ENCODE measurements at regions of chr15 and their contacts with region 1.

Region 1: DNA sequence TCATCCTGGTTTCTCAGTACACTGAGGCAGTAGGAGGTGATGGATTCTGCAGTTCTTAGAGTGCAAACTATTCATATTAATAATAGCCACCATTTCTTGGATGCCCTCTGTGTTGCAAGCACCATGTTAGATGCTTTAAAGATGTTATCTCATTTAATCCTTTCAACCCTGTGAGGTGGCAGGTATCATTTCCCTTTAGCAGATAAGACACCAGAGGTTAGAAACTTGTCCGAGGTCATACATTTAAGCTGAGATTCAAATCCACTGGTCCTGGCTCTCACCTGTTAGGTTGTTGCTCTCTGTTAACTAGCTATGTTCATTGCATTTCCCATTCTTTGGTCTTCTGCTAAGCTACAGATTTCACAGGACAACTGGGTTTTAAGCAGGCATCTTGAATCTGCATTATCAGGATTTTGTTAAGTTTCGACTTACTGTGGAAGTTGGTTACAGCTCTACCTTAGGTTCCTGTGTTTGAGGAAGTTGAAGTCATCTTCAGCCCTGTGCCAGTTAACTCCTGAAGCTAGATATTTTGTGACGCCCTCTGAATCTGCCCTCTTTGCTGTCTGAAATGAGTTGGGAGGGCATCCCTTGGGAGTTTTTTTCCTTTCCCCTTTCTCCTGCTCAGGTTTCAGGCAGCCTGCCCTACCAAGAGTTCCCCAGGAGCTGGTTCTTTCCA is 6.4 kb downstream of the PDE8A start:
- H3K4me3 Mint-ChIP-seq: no peak overlapping the region
- H3K27ac Mint-ChIP-seq: no peak overlapping the region
- H3K4me1 Mint-ChIP-seq: peaks cover 49% of the 10 kb centered on the region
- H3K27me3 Mint-ChIP-seq: no peaks in the 10 kb centered on the region

Region 2: GRCh38 chr15:84818261-84819131 is 169.6 kb before region 1 on chr15:
- intact Hi-C with region 1: no loop called
- H3K4me3 Mint-ChIP-seq: no peak overlapping the region
- H3K27ac Mint-ChIP-seq: peak overlapping the region; percentile 47
- H3K4me1 Mint-ChIP-seq: peaks cover 38% of the 10 kb centered on the region
- H3K27me3 Mint-ChIP-seq: peaks cover 16% of the 10 kb centered on the region

Region 3: GRCh38 chr15:85005319-85005718 is 17.2 kb after region 1 on chr15:
- intact Hi-C with region 1: loop called (anchors 2 kb)
- H3K4me3 Mint-ChIP-seq: no peak overlapping the region
- H3K27ac Mint-ChIP-seq: peak overlapping the region; percentile 81
- H3K4me1 Mint-ChIP-seq: peaks cover 88% of the 10 kb centered on the region
- H3K27me3 Mint-ChIP-seq: no peaks in the 10 kb centered on the region